AG04449 (cell line): ENCODE measurements at regions of chr18 and their contacts with region 1.

Region 1: GRCh38 chr18:10560450-10561045 is 34.7 kb downstream of the NAPG start:
- DNase-seq: no peak
- H3K4me3 ChIP-seq: peak overlapping the region; percentile 25
- CTCF ChIP-seq: peak; percentile 71

Region 2: GRCh38 chr18:10546557-10547300 is 13.8 kb before region 1 on chr18:
- CTCF ChIA-PET with region 1: interaction called, 60 read pairs
- POLR2A ChIA-PET with region 1: no interaction called
- DNase-seq: no peak
- H3K4me3 ChIP-seq: no peak overlapping the region
- CTCF ChIP-seq: no peak

Region 3: DNA sequence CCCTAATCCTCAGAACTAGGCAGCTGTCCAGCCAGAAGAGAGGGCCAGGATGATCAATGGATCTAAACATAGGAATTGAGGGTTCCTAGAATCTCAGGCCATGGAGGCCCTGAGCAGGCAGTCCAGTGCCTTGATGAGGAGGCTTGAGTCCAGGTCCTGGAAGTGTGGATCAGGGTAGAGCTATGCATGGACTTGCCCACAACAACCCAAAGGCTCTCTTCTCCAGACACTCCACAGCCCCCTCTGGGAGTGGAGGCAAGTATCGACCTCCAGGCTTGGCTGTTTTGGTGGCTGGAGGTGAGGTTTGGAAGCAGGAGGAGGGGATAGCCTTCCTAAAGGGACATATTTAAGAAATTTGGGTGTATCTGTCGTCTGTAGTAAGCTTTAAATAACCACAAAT is 11.0 kb after region 1 on chr18:
- CTCF ChIA-PET with region 1: interaction called, 24 read pairs
- POLR2A ChIA-PET with region 1: no interaction called
- DNase-seq: no peak
- H3K4me3 ChIP-seq: no peak overlapping the region
- CTCF ChIP-seq: no peak

Region 4: DNA sequence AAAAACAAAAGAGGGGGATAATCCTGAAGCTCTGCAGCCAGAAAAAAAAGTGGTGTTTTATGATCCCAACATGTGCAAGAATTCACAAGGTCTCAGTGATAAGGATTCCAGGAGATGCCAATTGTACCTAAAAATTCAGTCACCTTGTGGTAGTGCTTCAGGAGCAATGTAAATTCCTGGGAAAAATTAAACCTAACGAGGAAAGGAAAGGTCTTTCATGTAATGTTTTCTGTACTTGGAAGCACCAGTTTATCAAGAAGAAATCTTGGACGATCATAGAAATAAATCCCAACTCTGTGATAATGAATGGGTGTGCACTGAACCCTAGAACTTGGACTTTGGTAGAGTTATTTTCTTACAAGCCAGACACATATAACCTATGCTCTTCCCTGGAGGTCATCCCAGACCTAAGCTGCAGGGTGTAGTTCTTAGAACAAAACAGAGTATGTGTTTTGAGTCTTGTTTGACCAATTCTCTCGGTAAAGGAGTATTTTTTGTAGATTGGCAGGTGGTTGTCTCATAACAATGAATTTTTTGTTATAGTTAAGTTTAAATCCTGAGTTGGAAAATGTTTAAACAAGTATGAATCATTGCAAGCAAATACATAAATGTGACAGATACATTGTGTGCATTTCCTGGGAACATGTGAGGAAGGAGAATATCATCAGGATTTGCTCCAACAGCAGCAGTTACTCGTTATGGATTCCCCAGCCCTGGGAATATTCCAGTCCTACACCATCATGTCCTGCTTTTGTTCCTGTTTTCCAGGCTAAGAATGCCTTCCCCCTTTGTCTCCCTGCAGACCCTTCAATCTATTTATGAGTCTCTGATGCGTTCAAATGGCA is 189.9 kb after region 1 on chr18:
- CTCF ChIA-PET with region 1: no interaction called
- POLR2A ChIA-PET with region 1: no interaction called
- DNase-seq: no peak
- H3K4me3 ChIP-seq: no peak overlapping the region
- CTCF ChIP-seq: no peak

Region 5: GRCh38 chr18:10892786-10893185 is 332.2 kb after region 1 on chr18:
- CTCF ChIA-PET with region 1: no interaction called
- POLR2A ChIA-PET with region 1: no interaction called
- DNase-seq: no peak
- H3K4me3 ChIP-seq: no peak overlapping the region
- CTCF ChIP-seq: no peak

Region 6: GRCh38 chr18:11149441-11150270 is 589.1 kb after region 1 on chr18 and contains the start of gene PIEZO2:
- CTCF ChIA-PET with region 1: interaction called, 29 read pairs
- POLR2A ChIA-PET with region 1: no interaction called
- DNase-seq: no peak
- H3K4me3 ChIP-seq: peak within 1 kb of the TSS; percentile 57
- CTCF ChIP-seq: no peak

Region 7: GRCh38 chr18:11155034-11155759 is 594.6 kb after region 1 on chr18:
- CTCF ChIA-PET with region 1: interaction called, 29 read pairs
- POLR2A ChIA-PET with region 1: no interaction called
- DNase-seq: no peak
- H3K4me3 ChIP-seq: no peak overlapping the region
- CTCF ChIP-seq: no peak

Region 8: GRCh38 chr18:11570769-11571168 is 1010.2 kb after region 1 on chr18:
- CTCF ChIA-PET with region 1: interaction called, 10 read pairs
- POLR2A ChIA-PET with region 1: no interaction called
- DNase-seq: no peak
- H3K4me3 ChIP-seq: no peak overlapping the region
- CTCF ChIP-seq: peak; percentile 5